Activated naive CD4-positive, alpha-beta T cell treated with anti-CD3 and anti-CD28 coated beads for 36 hours (primary cell): ENCODE measurements at regions of chr10 and their contacts with region 1.

Region 1: GRCh38 chr10:31031558-31032257 is at the start of gene ZNF438:
- DNase-seq: peak; percentile 93
- H3K4me3 Mint-ChIP-seq: peak within 1 kb of the TSS; percentile 86
- H3K27ac Mint-ChIP-seq: peak within 1 kb of the TSS; percentile 98
- H3K4me1 Mint-ChIP-seq: peaks cover 16% of the 10 kb centered on the region
- H3K27me3 Mint-ChIP-seq: no peaks in the 10 kb centered on the region
- total RNA-seq, gene ZNF438: 2.4 to 2.6 TPM

Region 2: GRCh38 chr10:30963992-30964930 is 67.4 kb before region 1 on chr10:
- CTCF ChIA-PET with region 1: no interaction called
- intact Hi-C with region 1: loop called (anchors 1 kb)
- DNase-seq: peak; percentile 12
- H3K4me3 Mint-ChIP-seq: no peak overlapping the region
- H3K27ac Mint-ChIP-seq: peak overlapping the region; percentile 57
- H3K4me1 Mint-ChIP-seq: peaks cover 16% of the 10 kb centered on the region
- H3K27me3 Mint-ChIP-seq: no peaks in the 10 kb centered on the region

Region 3: DNA sequence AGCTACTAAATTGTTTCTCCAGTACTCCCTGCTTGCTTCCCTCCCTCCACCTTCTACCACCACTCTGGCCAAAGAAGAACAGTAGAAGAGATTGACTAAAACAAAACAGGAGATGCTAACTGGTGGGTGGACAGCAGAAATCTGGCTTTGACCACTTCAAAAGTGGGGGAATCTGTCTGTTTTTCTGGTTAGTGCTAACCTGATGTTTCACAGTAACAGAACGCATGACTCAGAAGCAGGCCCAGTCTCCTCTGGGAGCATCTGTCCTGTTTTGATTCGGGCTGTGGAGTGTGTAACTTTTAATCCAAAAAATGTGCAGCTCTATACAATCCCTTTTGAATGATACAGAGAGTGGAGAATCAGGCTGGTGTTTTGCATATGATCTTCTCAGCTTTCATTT is 32.6 kb after region 1 on chr10:
- CTCF ChIA-PET with region 1: no interaction called
- intact Hi-C with region 1: no loop called
- DNase-seq: no peak
- H3K4me3 Mint-ChIP-seq: no peak overlapping the region
- H3K27ac Mint-ChIP-seq: no peak overlapping the region
- H3K4me1 Mint-ChIP-seq: no peaks in the 10 kb centered on the region
- H3K27me3 Mint-ChIP-seq: peaks cover 2% of the 10 kb centered on the region

Region 4: GRCh38 chr10:31101123-31101522 is 69.4 kb after region 1 on chr10:
- CTCF ChIA-PET with region 1: interaction called, 5 read pairs
- intact Hi-C with region 1: loop called (anchors 1 kb)
- DNase-seq: peak; percentile 91
- H3K4me3 Mint-ChIP-seq: peak overlapping the region; percentile 50
- H3K27ac Mint-ChIP-seq: peak overlapping the region; percentile 85
- H3K4me1 Mint-ChIP-seq: peaks cover 44% of the 10 kb centered on the region
- H3K27me3 Mint-ChIP-seq: no peaks in the 10 kb centered on the region

Region 5: GRCh38 chr10:31490858-31491504 is 459.3 kb after region 1 on chr10:
- CTCF ChIA-PET with region 1: no interaction called
- intact Hi-C with region 1: loop called (anchors 1 kb)
- DNase-seq: peak; percentile 27
- H3K4me3 Mint-ChIP-seq: no peak overlapping the region
- H3K27ac Mint-ChIP-seq: no peak overlapping the region
- H3K4me1 Mint-ChIP-seq: no peaks in the 10 kb centered on the region
- H3K27me3 Mint-ChIP-seq: no peaks in the 10 kb centered on the region

Region 6: DNA sequence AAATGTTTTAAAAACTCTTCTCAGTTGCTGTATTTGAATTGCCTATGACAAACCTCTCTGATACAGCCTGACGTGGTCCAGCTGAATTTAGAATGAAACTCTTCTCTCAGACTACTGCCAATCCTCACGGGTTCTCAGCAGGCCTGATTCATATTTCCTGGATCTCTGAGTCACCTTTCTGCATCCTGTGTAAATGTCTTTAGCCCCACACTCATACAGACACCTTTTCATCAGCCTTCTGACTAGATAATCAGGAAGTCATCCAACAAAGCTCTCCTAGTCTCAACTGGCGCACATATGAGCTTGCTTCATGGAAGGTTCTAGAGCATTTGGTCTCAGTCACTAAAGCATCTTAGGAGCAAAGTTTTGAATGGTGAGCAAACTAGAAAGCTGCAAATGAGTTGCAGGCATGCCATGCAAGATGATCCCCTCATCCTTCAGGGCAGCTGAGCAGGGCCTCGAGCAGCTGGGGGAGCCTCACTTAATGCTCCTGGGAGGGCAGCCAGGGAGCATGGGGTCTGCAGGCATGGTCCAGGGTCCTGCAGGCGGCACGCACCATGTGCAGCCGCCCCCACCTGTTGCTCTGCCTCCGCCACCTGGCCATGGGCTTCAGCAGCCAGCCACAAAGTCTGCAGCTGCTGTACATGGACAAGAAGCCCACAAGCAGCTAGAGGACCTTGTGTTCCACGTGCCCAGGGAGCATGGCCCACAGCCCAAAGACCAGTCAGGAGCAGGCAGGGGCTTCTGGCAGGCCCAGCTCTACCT is 714.1 kb after region 1 on chr10:
- CTCF ChIA-PET with region 1: no interaction called
- intact Hi-C with region 1: loop called (anchors 5 kb)
- DNase-seq: peak; percentile 84
- H3K4me3 Mint-ChIP-seq: no peak overlapping the region
- H3K27ac Mint-ChIP-seq: peak overlapping the region; percentile 95
- H3K4me1 Mint-ChIP-seq: peaks cover 47% of the 10 kb centered on the region
- H3K27me3 Mint-ChIP-seq: no peaks in the 10 kb centered on the region